Activated T-helper 2 cell treated with anti-CD3 and anti-CD28 coated beads, Interferon-gamma antibody, Interleukin-2, Interleukin-4, amounts not matched to agents 10 μg/mL and 5 μg/mL and 100 μg/mL, durations not matched to agents 14 hours and 24 hours and 36 hours (primary cell): ENCODE measurements at regions of chr19 and their contacts with region 1.

Region 1: DNA sequence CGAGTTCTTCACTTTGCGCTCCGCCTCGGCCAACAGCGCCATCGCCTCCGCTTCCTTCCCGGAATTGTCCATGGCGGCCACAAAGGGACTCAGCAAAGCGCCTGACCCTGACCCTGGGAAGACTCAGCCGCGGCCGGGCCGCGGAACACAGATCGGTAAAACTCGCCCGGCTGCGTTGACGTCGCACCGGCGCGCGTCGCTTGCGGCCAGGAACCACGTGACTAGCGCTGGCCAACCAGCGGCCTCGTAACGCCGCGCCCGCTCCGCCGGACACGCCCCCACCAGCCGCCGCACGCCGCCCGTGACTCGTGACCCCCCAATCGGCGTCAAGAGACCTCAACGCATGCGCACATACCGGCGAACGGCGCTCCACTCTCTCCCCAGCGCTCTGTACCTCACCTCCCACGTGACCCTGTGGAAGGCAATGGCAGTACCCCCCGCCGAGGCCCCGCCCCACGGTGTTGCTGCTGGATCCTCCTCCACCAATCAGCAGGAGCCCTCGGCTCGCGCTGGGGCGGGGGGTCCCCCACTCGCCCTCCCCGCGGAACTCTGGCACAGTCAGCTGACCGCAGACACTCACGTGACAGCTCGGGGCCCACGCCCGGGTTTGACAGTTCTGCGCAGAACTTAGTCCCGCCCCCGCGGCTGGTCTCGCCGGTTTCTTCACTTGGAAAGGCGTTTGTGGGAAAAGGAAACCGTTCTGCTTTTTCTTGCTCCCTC is at the start of gene NAPA:
- DNase-seq: peak; percentile 100
- H3K4me3 Mint-ChIP-seq: peak within 1 kb of the TSS; percentile 96
- H3K27ac Mint-ChIP-seq: peak within 1 kb of the TSS; percentile 91
- H3K4me1 Mint-ChIP-seq: peaks cover 56% of the 10 kb centered on the region
- H3K27me3 Mint-ChIP-seq: no peaks in the 10 kb centered on the region
- total RNA-seq, gene NAPA: 56.9 and 60.1 TPM in 2 replicates

Region 2: DNA sequence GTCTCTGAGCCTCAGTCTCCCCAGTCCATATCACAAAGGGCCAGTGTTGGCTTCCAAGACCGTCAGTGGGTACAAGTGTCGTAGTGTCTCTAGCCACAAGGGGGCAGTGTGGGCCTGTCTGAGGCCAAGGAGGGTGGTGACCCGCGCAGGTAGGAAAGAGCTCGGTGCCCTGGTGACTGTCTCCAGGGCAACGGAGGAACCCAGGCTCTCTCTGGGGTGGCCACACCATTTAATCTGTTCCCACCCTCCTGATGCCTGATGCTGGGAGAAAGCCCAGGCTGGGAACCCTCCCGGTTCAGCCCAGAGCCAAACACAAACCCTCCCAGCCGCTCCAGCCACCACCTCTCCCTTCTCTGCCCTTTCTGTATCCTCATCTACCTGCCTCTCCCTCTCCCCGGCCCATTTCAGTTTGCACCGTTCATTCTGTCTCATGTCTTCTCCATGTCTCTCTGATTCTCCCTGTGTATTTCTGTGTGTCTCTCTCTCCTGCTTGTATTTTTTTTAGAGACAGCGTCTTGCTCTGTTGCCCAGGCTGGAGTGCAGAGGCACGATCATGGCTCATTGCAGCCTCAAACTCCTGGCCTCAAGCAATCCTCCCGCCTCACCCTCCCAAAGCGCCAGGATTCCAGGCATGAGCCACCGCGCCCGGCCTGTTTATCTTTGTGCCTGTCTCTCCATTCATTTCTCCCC is 78.2 kb before region 1 on chr19:
- intact Hi-C with region 1: loop called (anchors 1 kb)
- DNase-seq: peak; percentile 69
- H3K4me3 Mint-ChIP-seq: no peak overlapping the region
- H3K27ac Mint-ChIP-seq: no peak overlapping the region
- H3K4me1 Mint-ChIP-seq: peaks cover 19% of the 10 kb centered on the region
- H3K27me3 Mint-ChIP-seq: peaks cover 15% of the 10 kb centered on the region

Region 3: DNA sequence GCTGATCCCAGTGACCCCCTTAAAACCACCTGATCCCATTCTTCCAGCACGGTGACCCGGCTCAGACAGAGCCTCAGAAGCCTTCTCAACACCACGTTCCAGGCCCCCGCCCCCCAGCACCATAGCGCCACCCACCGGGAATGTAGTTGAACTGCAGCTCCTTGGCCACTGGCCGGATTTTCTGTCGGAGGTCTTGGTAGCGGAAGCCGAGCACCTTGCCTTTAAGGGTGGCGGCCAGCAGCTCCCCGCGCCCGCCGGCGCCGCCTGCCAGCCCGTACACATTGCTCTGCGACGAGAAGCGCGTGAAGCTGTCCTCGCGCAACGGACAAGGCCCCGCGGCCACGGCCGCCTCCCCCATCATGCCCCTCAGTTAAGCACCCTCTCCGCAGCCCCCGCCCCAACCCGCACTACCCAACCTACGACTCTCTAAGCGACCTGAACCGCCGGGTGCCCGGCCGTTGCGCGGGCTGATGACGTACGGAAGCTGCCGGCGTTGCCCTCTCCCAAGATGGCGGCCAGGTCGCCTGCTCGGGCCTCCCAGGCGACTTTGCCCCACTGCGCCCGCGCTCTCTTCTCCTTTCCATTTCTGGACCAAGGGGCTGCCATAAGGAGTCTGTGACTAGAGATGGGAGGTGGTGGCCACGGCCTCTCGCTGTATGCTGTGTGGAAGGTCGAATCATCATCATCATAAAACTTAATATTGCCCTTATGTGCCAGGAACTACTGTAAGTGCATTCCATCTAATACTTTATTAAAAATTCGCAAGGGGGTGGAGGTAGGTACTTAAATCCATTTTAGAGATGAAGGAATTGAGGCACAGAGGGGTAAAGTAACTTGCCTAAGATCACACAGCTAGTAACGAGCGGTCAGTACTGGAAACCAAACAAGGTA is 31.0 kb before region 1 on chr19 and contains the start of gene KPTN:
- intact Hi-C with region 1: loop called (anchors 1 kb)
- DNase-seq: peak; percentile 87
- H3K4me3 Mint-ChIP-seq: peak within 1 kb of the TSS; percentile 99
- H3K27ac Mint-ChIP-seq: peak within 1 kb of the TSS; percentile 96
- H3K4me1 Mint-ChIP-seq: peaks cover 22% of the 10 kb centered on the region
- H3K27me3 Mint-ChIP-seq: no peaks in the 10 kb centered on the region
- total RNA-seq, gene KPTN: 9.6 and 11.3 TPM in 2 replicates

Region 4: DNA sequence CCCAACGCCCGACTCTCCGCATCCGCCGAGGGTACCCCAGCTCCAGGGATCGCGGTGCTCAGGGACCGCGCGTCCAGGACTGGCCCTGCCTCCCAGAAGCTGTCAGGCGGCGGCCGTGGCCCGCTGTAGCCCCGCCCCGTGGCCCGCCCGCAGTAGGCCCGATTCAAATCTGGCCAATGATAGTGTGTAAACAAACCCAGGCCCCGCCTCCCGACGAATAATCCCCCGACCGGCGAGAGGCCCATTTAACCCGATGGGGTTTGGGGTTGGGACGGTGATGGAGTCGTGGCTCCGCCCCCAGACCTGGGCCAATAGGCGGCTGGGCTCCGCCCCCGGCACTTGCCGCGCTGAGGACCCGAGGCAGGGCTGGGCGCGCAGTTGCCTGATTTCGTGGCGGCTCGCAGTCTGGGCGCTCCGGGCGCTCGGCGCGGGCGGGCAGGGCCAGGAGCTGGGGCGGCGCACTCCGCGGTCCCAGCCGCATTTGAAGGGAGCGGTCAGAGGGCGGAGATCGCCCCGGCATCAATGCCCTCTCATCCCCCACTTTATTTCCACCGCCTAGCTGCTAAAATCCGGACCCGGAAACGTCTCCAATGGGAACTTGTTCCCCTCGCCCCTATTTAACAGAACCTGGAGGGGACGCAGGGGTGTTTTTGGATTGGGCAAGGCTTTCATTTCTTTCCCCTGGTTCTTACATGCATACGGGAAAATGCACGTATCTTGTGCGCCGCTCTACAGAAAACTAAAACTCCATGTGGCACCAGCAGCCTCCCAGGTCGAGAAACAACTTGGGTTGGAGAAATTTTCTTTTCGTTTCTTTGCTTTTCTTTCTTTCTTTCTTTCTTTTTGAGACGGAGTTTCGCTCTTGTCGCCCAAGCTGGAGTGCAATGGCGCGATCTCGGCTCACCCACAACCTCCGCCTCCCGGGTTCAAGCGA is 85.5 kb after region 1 on chr19:
- intact Hi-C with region 1: loop called (anchors 2 kb)
- DNase-seq: peak; percentile 98
- H3K4me3 Mint-ChIP-seq: peak overlapping the region; percentile 94
- H3K27ac Mint-ChIP-seq: peak overlapping the region; percentile 77
- H3K4me1 Mint-ChIP-seq: peaks cover 24% of the 10 kb centered on the region
- H3K27me3 Mint-ChIP-seq: peaks cover 2% of the 10 kb centered on the region

Region 5: DNA sequence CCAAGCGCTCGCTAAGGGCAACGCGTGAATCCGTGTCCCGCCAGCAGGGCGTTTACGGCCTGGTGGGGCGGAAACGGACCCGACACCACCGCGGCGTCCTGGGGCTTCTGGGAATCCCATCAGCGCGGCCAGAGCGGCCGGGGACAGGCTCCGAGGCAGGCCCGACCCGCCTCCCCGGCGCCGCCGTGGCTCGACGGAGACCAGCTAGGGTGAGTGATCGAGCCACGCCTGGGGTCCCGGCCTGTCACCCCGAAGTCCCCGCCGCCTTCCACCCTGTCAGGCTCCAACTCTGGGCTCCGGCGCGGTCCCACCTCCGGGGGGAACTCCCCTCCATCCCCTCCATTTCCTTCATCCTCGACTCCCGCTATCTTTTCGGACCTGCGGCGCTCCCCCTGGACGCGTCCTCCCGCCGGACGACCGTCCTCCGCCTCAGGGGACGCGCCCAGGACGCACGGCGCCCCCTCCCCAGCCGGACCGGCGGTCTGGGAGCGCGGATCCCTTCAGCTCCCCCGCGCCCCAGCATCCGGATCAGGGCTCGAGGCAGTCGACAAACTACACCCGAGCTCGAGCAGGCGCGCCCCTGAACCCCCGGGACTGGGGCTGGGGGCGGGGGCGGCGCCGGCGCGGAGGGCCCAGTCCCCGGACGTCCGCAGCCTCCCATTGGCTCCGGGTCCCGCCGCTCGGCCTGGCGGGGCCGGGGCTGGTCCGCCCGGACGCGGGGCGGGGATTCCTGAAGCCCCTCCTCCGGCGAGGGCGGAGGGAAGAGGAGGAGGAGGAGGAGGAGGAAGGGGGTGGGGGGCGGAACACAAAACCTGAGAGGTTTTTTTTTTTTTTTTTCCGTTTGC is 93.3 kb after region 1 on chr19:
- intact Hi-C with region 1: loop called (anchors 2 kb)
- DNase-seq: peak; percentile 94
- H3K4me3 Mint-ChIP-seq: peak overlapping the region; percentile 78
- H3K27ac Mint-ChIP-seq: peak overlapping the region; percentile 50
- H3K4me1 Mint-ChIP-seq: peaks cover 24% of the 10 kb centered on the region
- H3K27me3 Mint-ChIP-seq: no peaks in the 10 kb centered on the region

Region 6: GRCh38 chr19:47697863-47698609 is 183.0 kb after region 1 on chr19:
- intact Hi-C with region 1: loop called (anchors 1 kb)
- DNase-seq: peak; percentile 39
- H3K4me3 Mint-ChIP-seq: no peak overlapping the region
- H3K27ac Mint-ChIP-seq: no peak overlapping the region
- H3K4me1 Mint-ChIP-seq: no peaks in the 10 kb centered on the region
- H3K27me3 Mint-ChIP-seq: no peaks in the 10 kb centered on the region

Region 7: DNA sequence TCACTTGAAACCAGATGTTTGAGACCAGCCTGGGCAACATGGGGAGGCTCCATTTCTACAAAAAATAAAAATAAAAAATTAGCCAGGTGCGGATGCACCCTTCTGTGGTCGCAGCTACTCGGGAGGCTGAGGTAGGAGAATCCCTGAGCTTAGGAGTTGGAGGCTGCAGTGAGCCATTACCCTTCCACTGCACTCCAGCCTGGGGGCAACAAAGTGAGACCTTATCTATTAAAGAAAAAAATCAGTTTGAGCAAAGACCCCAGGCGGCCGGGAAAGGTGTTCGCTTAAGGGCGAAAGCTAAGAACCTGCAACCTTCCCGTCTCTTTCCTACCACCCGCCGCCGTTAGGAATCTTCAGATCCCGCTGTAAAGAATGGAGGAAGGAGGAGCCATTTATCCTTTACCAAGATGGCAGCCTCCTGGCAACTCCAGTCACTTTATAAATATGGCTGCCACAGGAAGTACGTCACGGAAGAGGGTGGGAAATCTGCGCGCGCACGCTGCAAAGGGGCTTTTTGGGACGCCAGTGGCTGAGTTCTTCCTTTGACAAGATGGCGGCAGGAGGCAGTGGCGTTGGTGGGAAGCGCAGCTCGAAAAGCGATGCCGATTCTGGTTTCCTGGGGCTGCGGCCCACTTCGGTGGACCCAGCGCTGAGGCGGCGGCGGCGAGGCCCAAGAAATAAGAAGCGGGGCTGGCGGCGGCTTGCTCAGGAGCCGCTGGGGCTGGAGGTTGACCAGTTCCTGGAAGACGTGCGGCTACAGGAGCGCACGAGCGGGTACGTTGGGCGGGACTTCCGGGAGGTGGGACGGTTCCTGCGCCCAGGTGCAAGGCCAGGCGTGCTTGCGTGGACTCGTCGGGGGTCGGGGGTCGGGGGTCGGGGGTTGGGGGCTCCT is 230.2 kb after region 1 on chr19 and contains the start of gene NOP53:
- intact Hi-C with region 1: loop called (anchors 5 kb)
- DNase-seq: peak; percentile 95
- H3K4me3 Mint-ChIP-seq: peak within 1 kb of the TSS; percentile 99
- H3K27ac Mint-ChIP-seq: peak within 1 kb of the TSS; percentile 98
- H3K4me1 Mint-ChIP-seq: peaks cover 26% of the 10 kb centered on the region
- H3K27me3 Mint-ChIP-seq: no peaks in the 10 kb centered on the region
- total RNA-seq, gene NOP53: 266 and 269 TPM in 2 replicates